ENCODE measurements at regions of chr1 and their contacts with region 1.

Region 1: GRCh38 chr1:153532769-153533599 is 2.8 kb downstream of the S100A6 start:
- DNase-seq: peak; percentile 55 to 86 (median 78)
- ATAC-seq: peak; percentile 13
- H3K4me3 ChIP-seq: peak overlapping the region in 1 of 2 experiments; percentile 33
- H3K4me3 Mint-ChIP-seq: peak overlapping the region; percentile 89
- H3K27ac ChIP-seq: peak overlapping the region; percentile 18 to 92
- H3K27ac Mint-ChIP-seq: peak overlapping the region; percentile 94
- H3K4me1 ChIP-seq: peaks cover 56% of the 10 kb centered on the region
- H3K4me1 Mint-ChIP-seq: peaks cover 67% of the 10 kb centered on the region
- H3K27me3 ChIP-seq: no peaks in the 10 kb centered on the region
- H3K27me3 Mint-ChIP-seq: no peaks in the 10 kb centered on the region
- CTCF ChIP-seq: peak; percentile 79

Region 2: GRCh38 chr1:151920149-151920548 is 1612.8 kb before region 1 on chr1:
- CTCF ChIA-PET with region 1: no interaction called
- POLR2A ChIA-PET with region 1: no interaction called
- intact Hi-C with region 1: no loop called
- DNase-seq: no peak
- ATAC-seq: no peak
- H3K4me3 ChIP-seq: no peak overlapping the region
- H3K4me3 Mint-ChIP-seq: no peak overlapping the region
- H3K27ac ChIP-seq: no peak overlapping the region
- H3K27ac Mint-ChIP-seq: no peak overlapping the region
- H3K4me1 ChIP-seq: peaks cover 3% of the 10 kb centered on the region
- H3K4me1 Mint-ChIP-seq: peaks cover 3% of the 10 kb centered on the region
- H3K27me3 ChIP-seq: no peaks in the 10 kb centered on the region
- H3K27me3 Mint-ChIP-seq: no peaks in the 10 kb centered on the region
- CTCF ChIP-seq: no peak

Region 3: DNA sequence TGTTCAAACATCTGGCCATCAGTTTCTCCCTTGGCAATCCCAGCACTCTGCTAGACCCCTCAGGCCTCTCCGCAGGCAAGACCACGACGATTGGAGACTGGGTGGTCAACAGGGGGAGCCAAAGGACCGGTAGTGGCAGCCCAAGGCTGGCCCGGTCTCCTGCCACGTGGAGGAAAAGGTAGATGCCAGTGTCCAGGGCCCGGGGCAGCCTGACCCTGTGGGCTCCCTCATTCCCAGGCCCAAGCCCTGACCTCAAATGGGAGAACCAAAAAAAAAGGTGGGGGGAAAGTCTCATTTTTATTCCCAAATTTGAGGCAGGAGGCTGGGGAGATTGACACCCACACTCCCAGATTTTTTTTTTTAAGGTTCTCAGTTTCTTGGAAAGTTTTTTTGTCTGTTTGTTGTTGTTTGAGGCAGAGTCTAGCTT is 22.0 kb before region 1 on chr1:
- CTCF ChIA-PET with region 1: interaction called, 93 read pairs
- POLR2A ChIA-PET with region 1: interaction called, 3 read pairs
- intact Hi-C with region 1: loop called (anchors 1 to 2 kb)
- DNase-seq: peak; percentile 53 to 89 (median 82)
- ATAC-seq: peak; percentile 90
- H3K4me3 ChIP-seq: no peak overlapping the region
- H3K4me3 Mint-ChIP-seq: no peak overlapping the region
- H3K27ac ChIP-seq: no peak overlapping the region
- H3K27ac Mint-ChIP-seq: no peak overlapping the region
- H3K4me1 ChIP-seq: no peaks in the 10 kb centered on the region
- H3K4me1 Mint-ChIP-seq: no peaks in the 10 kb centered on the region
- H3K27me3 ChIP-seq: no peaks in the 10 kb centered on the region
- H3K27me3 Mint-ChIP-seq: no peaks in the 10 kb centered on the region
- CTCF ChIP-seq: peak; percentile 94

Region 4: DNA sequence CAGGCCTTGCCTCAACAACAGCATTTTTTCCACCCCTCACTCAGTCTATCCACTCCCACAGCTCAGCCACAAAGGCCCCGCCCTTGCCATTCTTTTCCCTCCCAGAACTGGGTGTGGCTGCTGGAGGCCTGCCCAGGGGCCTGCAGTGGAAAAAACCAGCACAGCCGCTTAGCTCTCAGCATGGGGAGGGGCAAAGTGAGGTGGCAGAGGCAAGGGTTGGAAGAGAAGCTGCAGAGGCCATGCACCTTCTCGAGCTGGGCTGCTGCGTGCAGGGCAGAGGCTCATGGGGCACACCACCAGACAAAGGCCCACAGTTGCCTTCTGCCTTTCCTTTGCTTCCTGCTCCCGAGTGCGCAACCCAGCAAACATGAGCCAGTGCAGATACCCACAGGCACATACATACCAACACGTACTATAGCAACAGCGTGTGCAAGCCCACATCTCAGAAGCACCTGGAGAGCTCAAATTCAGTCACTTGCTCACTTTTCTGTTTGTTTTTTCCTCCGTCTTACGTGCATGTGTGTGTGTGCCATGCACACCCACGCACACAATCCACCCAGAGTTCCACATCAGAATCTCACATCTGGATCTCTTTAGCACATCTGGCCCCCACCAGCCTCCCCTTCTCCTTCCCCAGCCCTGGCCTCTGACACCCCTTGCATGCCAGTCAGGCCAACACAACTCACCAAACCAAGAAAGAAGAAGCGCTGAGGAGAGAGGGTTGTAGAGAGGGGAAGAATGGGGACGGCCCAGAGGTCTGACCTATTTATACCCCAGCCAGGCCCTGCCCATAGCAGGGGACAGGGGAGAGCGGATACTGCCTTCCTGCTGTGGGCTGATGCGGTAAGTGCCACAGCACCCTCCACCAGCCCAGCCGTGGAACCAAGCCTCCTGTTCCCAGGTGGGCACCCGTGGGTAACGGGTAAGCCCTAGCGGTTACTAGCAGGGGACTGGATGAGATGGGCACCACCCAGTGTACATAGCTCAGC is 12.4 kb after region 1 on chr1 and contains the start of gene S100A4:
- CTCF ChIA-PET with region 1: interaction called, 201 read pairs
- POLR2A ChIA-PET with region 1: interaction called, 131 read pairs
- intact Hi-C with region 1: loop called (anchors 1 kb)
- DNase-seq: peak; percentile 47 to 91 (median 83)
- ATAC-seq: peak; percentile 74
- H3K4me3 ChIP-seq: peak within 1 kb of the TSS; percentile 56 to 64
- H3K4me3 Mint-ChIP-seq: peak within 1 kb of the TSS; percentile 87
- H3K27ac ChIP-seq: peak within 1 kb of the TSS; percentile 66 to 69
- H3K27ac Mint-ChIP-seq: peak within 1 kb of the TSS; percentile 91
- H3K4me1 ChIP-seq: peaks cover 65% of the 10 kb centered on the region
- H3K4me1 Mint-ChIP-seq: peaks cover 66% of the 10 kb centered on the region
- H3K27me3 ChIP-seq: no peaks in the 10 kb centered on the region
- H3K27me3 Mint-ChIP-seq: no peaks in the 10 kb centered on the region
- CTCF ChIP-seq: no peak
- total RNA-seq, gene S100A4: 172 to 177 TPM

Region 5: DNA sequence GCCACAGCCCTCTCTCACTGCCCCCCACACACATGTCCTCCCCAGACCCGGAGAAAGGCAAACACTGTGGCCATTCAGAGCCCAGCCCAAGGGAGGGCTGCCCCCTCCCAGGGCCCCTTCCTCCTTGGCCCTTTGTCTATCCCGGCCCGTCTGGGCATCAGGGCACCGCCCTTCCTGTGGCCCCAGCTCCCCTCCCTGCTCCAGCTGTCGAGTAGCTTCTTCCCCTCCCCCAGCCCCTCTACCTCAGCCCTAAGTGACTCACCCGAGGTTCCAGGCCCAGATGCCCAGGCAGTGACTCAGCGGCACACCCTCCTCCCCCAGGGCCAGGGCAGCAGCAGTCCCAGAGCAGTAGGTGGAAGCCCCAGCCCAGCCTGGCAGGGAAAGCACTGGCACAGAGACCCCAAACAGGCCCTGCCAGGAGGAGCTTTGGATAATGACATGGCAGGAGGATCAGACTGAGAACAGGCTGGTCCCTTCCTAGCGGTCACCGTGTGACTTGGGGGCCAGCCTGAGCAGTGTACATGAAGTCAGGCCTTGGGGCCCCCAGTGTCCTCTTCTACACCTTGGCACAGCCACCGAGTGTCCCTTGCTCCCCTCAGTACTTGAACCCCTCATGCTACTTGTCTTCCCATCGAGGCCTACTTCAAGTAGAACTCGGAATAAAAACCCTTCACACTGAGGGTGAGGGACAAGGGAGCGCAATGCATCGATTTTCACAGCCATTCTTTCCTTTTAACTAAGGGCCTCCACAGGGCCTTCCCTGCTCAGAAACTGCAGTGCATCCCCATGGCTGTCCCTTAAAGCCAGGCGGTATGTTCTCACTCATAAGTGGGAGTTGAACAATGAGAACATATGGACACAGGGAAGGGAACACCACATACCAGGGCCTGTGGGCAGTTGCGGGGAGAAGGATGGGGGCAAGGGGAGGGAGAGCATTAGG is 33.7 kb after region 1 on chr1:
- CTCF ChIA-PET with region 1: interaction called, 168 read pairs
- POLR2A ChIA-PET with region 1: interaction called, 11 read pairs
- intact Hi-C with region 1: loop called (anchors 1 kb)
- DNase-seq: peak; percentile 38 to 90 (median 80)
- ATAC-seq: peak; percentile 82
- H3K4me3 ChIP-seq: no peak overlapping the region
- H3K4me3 Mint-ChIP-seq: no peak overlapping the region
- H3K27ac ChIP-seq: peak overlapping the region in 1 of 2 experiments; percentile 67
- H3K27ac Mint-ChIP-seq: peak overlapping the region; percentile 69
- H3K4me1 ChIP-seq: peaks cover 17% of the 10 kb centered on the region
- H3K4me1 Mint-ChIP-seq: peaks cover 26% of the 10 kb centered on the region
- H3K27me3 ChIP-seq: no peaks in the 10 kb centered on the region
- H3K27me3 Mint-ChIP-seq: peaks cover 8% of the 10 kb centered on the region
- CTCF ChIP-seq: no peak

Region 6: GRCh38 chr1:153577624-153578051 is 44.7 kb after region 1 on chr1:
- CTCF ChIA-PET with region 1: interaction called, 168 read pairs
- POLR2A ChIA-PET with region 1: no interaction called
- intact Hi-C with region 1: no loop called
- DNase-seq: no peak
- ATAC-seq: no peak
- H3K4me3 ChIP-seq: no peak overlapping the region
- H3K4me3 Mint-ChIP-seq: no peak overlapping the region
- H3K27ac ChIP-seq: no peak overlapping the region
- H3K27ac Mint-ChIP-seq: no peak overlapping the region
- H3K4me1 ChIP-seq: no peaks in the 10 kb centered on the region
- H3K4me1 Mint-ChIP-seq: no peaks in the 10 kb centered on the region
- H3K27me3 ChIP-seq: peaks cover 0 to 4% of the 10 kb centered on the region in 2 experiments
- H3K27me3 Mint-ChIP-seq: peaks cover 22% of the 10 kb centered on the region
- CTCF ChIP-seq: no peak

Region 7: GRCh38 chr1:153626922-153627796 is 94.2 kb after region 1 on chr1 and contains the start of gene S100A13:
- CTCF ChIA-PET with region 1: interaction called, 4 read pairs
- POLR2A ChIA-PET with region 1: no interaction called
- intact Hi-C with region 1: loop called in 1 of 2 experiments (anchors 2 kb)
- DNase-seq: no peak
- ATAC-seq: peak; percentile 17
- H3K4me3 ChIP-seq: no peak within 1 kb of the TSS
- H3K4me3 Mint-ChIP-seq: peak within 1 kb of the TSS; percentile 5
- H3K27ac ChIP-seq: no peak within 1 kb of the TSS
- H3K27ac Mint-ChIP-seq: no peak within 1 kb of the TSS
- H3K4me1 ChIP-seq: no peaks in the 10 kb centered on the region
- H3K4me1 Mint-ChIP-seq: peaks cover 4% of the 10 kb centered on the region
- H3K27me3 ChIP-seq: peaks cover 0 to 2% of the 10 kb centered on the region in 2 experiments
- H3K27me3 Mint-ChIP-seq: peaks cover 14% of the 10 kb centered on the region
- CTCF ChIP-seq: no peak
- total RNA-seq, gene S100A13: 3.9 to 4.9 TPM

Region 8: DNA sequence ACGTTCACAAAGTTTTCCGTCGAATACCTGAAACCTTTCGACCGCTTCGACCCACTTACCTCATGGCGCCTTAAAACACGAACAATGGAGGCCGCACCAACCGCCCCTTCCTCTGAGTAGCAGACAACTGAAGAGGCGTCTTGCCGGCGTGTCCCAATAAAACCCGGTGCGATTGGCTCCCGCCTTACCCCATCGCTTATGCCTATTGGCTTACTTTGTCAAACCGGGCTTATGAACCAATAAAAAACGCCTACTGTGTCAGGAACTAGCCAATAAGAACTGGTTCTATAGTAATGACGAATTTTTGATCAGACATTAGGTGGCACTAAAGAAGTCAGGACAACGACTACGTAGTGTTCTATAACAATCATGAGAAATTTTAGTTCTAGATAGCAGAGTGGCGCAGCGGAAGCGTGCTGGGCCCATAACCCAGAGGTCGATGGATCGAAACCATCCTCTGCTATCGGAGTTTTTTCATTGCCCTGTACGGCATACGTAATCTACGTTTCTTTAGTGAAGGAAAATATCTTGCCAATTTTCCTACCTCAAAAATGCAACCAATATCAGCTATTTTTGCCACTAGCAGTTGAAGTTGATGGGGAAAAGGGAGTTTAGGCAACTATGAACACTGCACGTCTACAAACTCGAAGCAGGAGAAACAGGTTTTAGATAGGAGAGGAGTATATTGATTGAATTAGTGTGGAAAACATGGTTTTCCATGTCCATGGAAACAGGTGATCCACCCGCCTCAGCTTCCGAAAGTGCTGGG is 138.1 kb after region 1 on chr1 and contains the start of gene ILF2:
- CTCF ChIA-PET with region 1: no interaction called
- POLR2A ChIA-PET with region 1: interaction called, 3 read pairs
- intact Hi-C with region 1: loop called in 1 of 2 experiments (anchors 2 kb)
- DNase-seq: peak; percentile 89 to 99 (median 97)
- ATAC-seq: peak; percentile 87
- H3K4me3 ChIP-seq: peak within 1 kb of the TSS; percentile 76 to 81
- H3K4me3 Mint-ChIP-seq: no peak within 1 kb of the TSS
- H3K27ac ChIP-seq: peak within 1 kb of the TSS; percentile 89 to 94
- H3K27ac Mint-ChIP-seq: peak within 1 kb of the TSS; percentile 67
- H3K4me1 ChIP-seq: peaks cover 22% of the 10 kb centered on the region
- H3K4me1 Mint-ChIP-seq: peaks cover 20% of the 10 kb centered on the region
- H3K27me3 ChIP-seq: no peaks in the 10 kb centered on the region
- H3K27me3 Mint-ChIP-seq: peaks cover under 1% of the 10 kb centered on the region
- CTCF ChIP-seq: no peak
- total RNA-seq, gene ILF2: 150 to 156 TPM